Astrocyte of the cerebellum (primary cell): ENCODE measurements at regions of chr7 and their contacts with region 1.

Region 1: DNA sequence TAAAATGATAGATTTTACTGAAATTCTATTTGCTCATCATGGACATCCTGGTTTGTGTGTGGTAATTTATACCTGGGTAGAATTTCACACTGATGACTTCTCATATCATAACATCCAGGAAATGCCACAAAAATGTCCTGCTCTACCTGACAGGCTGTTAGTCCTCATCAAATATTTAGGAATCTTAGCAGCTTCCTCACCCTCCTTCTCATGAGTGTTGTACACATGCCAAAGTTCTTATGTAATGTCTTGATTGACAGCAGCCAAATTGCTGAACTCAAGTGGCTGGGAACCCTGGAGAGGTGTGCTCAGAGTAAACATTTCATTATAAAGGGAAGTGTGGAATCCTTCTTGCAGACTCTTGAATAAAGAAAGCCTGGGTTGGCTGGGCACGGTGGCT is 8.9 kb downstream of the EEPD1 start:
- DNase-seq: no peak
- H3K4me3 ChIP-seq: no peak overlapping the region
- CTCF ChIP-seq: no peak

Region 2: DNA sequence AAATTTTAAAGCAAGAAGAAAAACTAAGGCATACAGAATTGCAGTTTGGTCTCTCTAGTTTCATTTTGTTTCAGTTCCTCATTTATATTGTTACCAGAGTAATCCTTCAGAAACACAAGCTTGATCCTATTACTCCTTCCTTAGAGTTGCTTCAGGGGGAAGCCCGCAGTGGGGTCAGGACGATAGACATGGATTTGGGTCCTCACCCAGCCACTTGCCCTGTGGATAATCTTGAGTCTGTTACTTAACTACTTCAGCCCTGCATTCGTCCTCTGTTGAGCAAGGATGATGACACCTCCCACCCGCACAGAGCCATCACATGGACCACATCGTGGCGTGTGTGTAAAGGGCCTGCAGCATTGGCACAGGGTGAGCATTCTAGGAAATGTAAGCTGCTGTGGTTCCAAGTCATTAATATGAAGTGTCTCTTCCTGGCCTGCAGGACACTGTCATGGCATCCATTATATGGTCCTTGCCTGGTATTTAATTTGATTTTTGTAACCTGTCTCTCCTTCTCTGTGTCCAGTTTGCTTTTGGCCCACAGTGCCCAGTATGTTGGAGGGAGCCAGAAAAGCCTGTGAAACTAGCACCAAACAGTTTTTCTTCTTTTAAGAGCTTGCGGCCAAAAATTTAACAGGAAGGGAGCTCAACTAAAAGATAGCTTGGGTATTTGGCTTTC is 102.3 kb after region 1 on chr7:
- in situ Hi-C with region 1: loop called (anchors 5 kb)
- DNase-seq: no peak
- H3K4me3 ChIP-seq: no peak overlapping the region
- CTCF ChIP-seq: no peak

Region 3: DNA sequence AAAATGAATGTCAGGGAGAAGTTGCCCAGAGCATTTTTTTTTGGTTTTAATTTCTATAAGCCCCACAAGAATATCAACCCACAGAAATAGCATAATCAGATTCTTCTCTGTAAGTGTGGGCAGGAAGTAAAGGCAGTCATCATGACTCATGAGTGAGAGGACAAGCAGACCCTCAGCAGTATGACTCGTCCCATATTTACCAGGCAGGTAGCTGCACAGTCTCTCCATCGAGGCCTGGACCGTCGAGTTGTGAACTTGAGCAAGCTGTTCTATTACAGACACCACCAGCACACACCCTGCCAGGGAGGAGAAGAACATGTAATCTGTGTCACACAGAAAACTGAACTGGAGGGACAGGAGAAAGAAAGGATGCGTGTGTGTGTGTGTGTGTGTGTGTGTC is 524.5 kb after region 1 on chr7:
- in situ Hi-C with region 1: no loop called
- DNase-seq: no peak
- H3K4me3 ChIP-seq: no peak overlapping the region
- CTCF ChIP-seq: no peak